Transverse colon (tissue), 4 donors: ENCODE measurements at regions of chr14 and their contacts with region 1.

Region 1: GRCh38 chr14:37246427-37246914 is 48.7 kb downstream of the MIPOL1 start:
- DNase-seq: no peak
- H3K4me3 ChIP-seq: no peak overlapping the region
- H3K27ac ChIP-seq: no peak overlapping the region
- H3K4me1 ChIP-seq: peaks cover 0 to 9% (median 0%) of the 10 kb centered on the region in 4 donors
- H3K27me3 ChIP-seq: no peaks in the 10 kb centered on the region
- CTCF ChIP-seq: peak; percentile 73 to 83 (median 78)
- EP300 ChIP-seq: no peak
- POLR2A ChIP-seq: no peak

Region 2: DNA sequence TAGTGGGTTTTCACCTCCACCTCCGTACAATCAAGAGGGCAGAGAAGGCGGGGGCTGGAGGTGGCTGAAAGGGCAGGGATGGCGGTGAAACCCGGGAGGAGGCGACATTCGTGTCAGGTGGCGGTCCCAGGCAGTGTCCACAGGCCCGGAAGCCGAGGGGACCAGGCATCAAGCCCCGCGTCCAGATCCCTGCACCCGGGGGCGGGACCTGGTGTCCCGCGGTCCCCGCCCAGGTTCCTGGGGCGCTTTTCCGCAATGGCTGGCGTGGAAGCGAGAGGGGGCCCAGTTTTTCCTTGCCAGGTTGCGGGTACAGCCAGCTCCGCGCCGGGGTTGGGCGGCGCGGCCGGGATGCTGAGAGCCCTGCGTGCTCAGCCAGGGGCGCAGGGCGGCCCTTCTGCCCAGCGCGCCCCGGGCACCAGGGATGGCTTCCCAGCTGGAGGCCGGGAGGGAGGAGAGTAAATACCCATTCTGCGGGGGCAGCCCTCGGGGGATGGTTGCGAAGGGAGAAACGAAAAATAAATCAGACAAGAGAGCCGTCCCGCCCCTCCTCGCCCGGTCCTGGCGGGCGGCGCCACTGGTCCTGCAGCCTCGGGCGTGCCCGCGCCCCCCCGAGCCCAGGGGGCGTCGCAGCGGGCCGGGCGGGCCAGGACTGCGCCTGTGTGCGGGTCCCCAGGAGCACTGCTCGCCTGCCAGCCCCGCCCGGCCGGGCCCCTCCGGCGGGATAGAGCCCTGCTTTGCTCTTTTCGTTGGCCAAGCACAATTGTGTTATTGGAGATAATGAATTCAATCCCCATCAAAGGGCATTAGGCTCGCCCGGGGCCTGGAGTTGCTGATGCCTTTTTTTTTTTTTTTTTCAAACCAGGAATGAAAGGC is 337.1 kb after region 1 on chr14:
- in situ Hi-C with region 1: loop called in 1 of 4 experiments (anchors 10 kb)
- intact Hi-C with region 1: no loop called
- DNase-seq: peak; percentile 48
- H3K4me3 ChIP-seq: peak overlapping the region in 3 of 4 donors; percentile 42 to 57 (median 45)
- H3K27ac ChIP-seq: peak overlapping the region; percentile 87 to 94 (median 90)
- H3K4me1 ChIP-seq: peaks cover 4 to 37% (median 18%) of the 10 kb centered on the region in 4 donors
- H3K27me3 ChIP-seq: peaks cover 62% of the 10 kb centered on the region
- CTCF ChIP-seq: no peak
- EP300 ChIP-seq: no peak
- POLR2A ChIP-seq: peak; percentile 50

Region 3: GRCh38 chr14:37864861-37865718 is 618.6 kb after region 1 on chr14:
- in situ Hi-C with region 1: loop called in 3 of 4 experiments (anchors 10 to 25 kb)
- intact Hi-C with region 1: no loop called
- DNase-seq: peak; percentile 12
- H3K4me3 ChIP-seq: no peak overlapping the region
- H3K27ac ChIP-seq: peak overlapping the region in 2 of 4 donors; percentile 24 to 57
- H3K4me1 ChIP-seq: peaks cover 0 to 17% (median 3%) of the 10 kb centered on the region in 4 donors
- H3K27me3 ChIP-seq: no peaks in the 10 kb centered on the region
- CTCF ChIP-seq: no peak
- EP300 ChIP-seq: no peak
- POLR2A ChIP-seq: no peak